Activated CD8-positive, alpha-beta T cell treated with anti-CD3 and anti-CD28 coated beads for 36 hours (primary cell): ENCODE measurements at regions of chr3 and their contacts with region 1.

Region 1: GRCh38 chr3:63349583-63350521 is 71.7 kb downstream of the SYNPR start:
- DNase-seq: peak; percentile 60
- ATAC-seq: peak; percentile 49
- H3K4me3 Mint-ChIP-seq: no peak overlapping the region
- H3K27ac Mint-ChIP-seq: no peak overlapping the region
- H3K4me1 Mint-ChIP-seq: no peaks in the 10 kb centered on the region
- H3K27me3 Mint-ChIP-seq: peaks cover 17% of the 10 kb centered on the region
- CTCF ChIP-seq: peak; percentile 70

Region 2: GRCh38 chr3:63323797-63324196 is 26.1 kb before region 1 on chr3:
- CTCF ChIA-PET with region 1: no interaction called
- POLR2A ChIA-PET with region 1: no interaction called
- intact Hi-C with region 1: no loop called
- DNase-seq: no peak
- ATAC-seq: no peak
- H3K4me3 Mint-ChIP-seq: no peak overlapping the region
- H3K27ac Mint-ChIP-seq: no peak overlapping the region
- H3K4me1 Mint-ChIP-seq: no peaks in the 10 kb centered on the region
- H3K27me3 Mint-ChIP-seq: no peaks in the 10 kb centered on the region
- CTCF ChIP-seq: no peak

Region 3: GRCh38 chr3:63338351-63338750 is 11.5 kb before region 1 on chr3:
- CTCF ChIA-PET with region 1: interaction called, 10 read pairs
- POLR2A ChIA-PET with region 1: no interaction called
- intact Hi-C with region 1: no loop called
- DNase-seq: no peak
- ATAC-seq: no peak
- H3K4me3 Mint-ChIP-seq: no peak overlapping the region
- H3K27ac Mint-ChIP-seq: no peak overlapping the region
- H3K4me1 Mint-ChIP-seq: no peaks in the 10 kb centered on the region
- H3K27me3 Mint-ChIP-seq: peaks cover 3% of the 10 kb centered on the region
- CTCF ChIP-seq: no peak

Region 4: DNA sequence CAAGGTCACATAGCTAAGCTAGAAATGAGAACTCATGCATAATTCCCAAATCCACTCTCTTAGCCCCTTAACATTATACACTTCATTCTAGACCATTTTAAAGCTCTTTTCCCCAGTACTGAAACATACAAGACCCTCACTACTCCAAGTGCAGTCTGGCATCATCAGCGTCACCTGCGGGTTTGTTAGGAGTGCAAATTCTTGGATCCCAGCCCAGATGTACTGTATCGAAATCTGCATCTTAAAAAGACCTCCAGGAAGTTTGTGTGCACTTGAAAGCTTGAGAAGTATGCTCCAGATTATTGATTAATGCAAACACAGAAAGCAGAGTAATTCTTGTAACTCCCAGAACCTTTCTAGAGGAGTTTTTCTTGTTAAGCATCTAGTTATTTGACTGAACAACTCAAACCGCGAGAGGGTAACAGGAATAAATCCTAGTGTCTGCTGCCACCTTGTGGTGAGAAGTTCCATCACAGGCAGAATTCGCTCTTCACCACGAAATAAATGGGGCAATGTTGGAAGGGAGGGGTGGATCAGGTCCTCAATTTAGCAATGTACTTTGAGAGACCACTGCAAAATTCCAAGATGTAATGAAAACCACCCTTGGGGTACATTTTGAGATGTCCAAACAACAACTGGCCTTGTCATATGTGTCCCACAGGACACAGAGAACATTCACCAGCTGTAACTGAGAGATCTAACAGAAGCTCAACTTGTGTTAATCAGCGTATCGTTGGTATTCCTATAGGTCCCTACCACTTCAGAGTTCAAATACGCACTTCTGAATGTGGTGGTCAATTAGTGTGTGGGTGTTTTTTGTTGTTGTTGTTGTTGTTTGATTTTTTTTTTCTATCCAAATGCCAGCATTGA is 468.7 kb after region 1 on chr3:
- CTCF ChIA-PET with region 1: interaction called, 81 read pairs
- POLR2A ChIA-PET with region 1: no interaction called
- intact Hi-C with region 1: loop called (anchors 2 kb)
- DNase-seq: peak; percentile 74
- ATAC-seq: peak; percentile 67
- H3K4me3 Mint-ChIP-seq: no peak overlapping the region
- H3K27ac Mint-ChIP-seq: no peak overlapping the region
- H3K4me1 Mint-ChIP-seq: no peaks in the 10 kb centered on the region
- H3K27me3 Mint-ChIP-seq: no peaks in the 10 kb centered on the region
- CTCF ChIP-seq: peak; percentile 87